Heart left ventricle (tissue), 16 donors: ENCODE measurements at regions of chr2 and their contacts with region 1.

Region 1: GRCh38 chr2:97983698-97984097 is 12.1 kb downstream of the TMEM131 start:
- DNase-seq: no peak
- ATAC-seq: peak in 2 of 4 donors; percentile 63 to 72
- H3K4me3 ChIP-seq: no peak overlapping the region
- H3K27ac ChIP-seq: peak overlapping the region in 1 of 12 donors; percentile 6
- H3K4me1 ChIP-seq: peaks cover 0 to 39% (median 10%) of the 10 kb centered on the region in 12 donors
- H3K27me3 ChIP-seq: no peaks in the 10 kb centered on the region
- CTCF ChIP-seq: no peak
- POLR2A ChIP-seq: no peak

Region 2: DNA sequence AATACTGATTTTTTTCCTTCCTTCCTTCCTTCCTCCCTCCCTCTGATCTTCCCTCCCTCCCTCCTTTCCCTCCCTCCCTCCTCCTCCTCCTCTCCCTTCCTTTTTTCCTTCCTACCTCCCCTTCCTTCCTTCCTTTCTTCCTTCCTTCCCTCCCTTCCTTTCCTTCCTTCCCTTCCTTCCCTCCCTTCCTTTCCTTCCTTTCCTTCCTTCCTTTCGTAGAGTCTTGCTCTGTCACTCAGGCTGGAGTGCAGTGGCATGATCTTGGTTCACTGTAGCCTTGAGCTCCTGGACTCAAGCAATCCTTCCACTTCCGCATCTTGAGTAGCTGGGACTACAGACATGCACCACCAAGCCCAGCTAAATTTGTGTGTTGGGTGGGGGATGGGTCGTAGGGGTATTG is 20.9 kb after region 1 on chr2:
- intact Hi-C with region 1: loop called in 1 of 10 experiments (anchors 1 kb)
- DNase-seq: no peak
- ATAC-seq: no peak
- H3K4me3 ChIP-seq: no peak overlapping the region
- H3K27ac ChIP-seq: no peak overlapping the region
- H3K4me1 ChIP-seq: no peaks in the 10 kb centered on the region
- H3K27me3 ChIP-seq: no peaks in the 10 kb centered on the region
- CTCF ChIP-seq: no peak
- POLR2A ChIP-seq: no peak